Naive thymus-derived CD4-positive, alpha-beta T cell (primary cell): ENCODE measurements at regions of chr5 and their contacts with region 1.

Region 1: DNA sequence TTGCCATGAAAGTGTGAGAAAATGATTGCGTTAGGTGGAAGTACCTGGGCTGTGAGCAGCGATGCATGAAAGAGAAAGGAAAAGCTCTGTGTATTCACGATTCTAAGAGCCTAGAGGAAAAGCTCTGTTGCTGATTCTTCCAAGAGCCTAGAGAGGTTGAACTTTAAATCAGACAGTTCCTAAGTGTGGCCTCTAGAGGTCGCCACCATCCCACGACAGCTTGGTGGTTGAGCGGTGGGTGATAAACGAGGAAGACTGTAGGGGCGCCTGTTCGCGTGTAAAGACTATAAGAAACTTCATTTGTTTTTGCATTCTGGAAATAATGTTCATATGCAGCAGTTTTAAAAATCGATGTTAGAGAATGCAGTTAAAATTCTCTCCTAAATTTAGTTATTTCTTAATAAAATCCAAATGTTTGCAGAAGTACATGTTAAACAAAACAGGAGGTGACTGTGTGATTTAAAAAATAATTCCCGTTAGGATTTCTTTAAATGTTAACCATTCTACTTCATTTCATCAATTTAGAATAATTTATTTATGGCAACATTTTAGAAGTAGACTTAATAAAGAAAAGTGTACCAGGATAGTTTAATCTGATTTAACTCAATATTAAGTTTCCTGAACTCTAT is 107.7 kb downstream of the TENT4A start:
- DNase-seq: peak in 6 of 9 donors; percentile 16 to 64 (median 30)
- ATAC-seq: peak; percentile 75
- H3K4me3 ChIP-seq: no peak overlapping the region
- H3K4me3 Mint-ChIP-seq: no peak overlapping the region
- H3K27ac ChIP-seq: no peak overlapping the region
- H3K27ac Mint-ChIP-seq: no peak overlapping the region
- H3K4me1 ChIP-seq: no peaks in the 10 kb centered on the region
- H3K4me1 Mint-ChIP-seq: peaks cover 0 to 9% (median 0%) of the 10 kb centered on the region in 7 donors
- H3K27me3 ChIP-seq: peaks cover 0 to 7% of the 10 kb centered on the region in 2 donors
- H3K27me3 Mint-ChIP-seq: peaks cover 11 to 34% (median 27%) of the 10 kb centered on the region in 5 donors

Region 2: GRCh38 chr5:6837519-6838110 is 16.6 kb after region 1 on chr5:
- CTCF ChIA-PET with region 1: no interaction called
- POLR2A ChIA-PET with region 1: no interaction called
- intact Hi-C with region 1: loop called in 1 of 2 experiments (anchors 2 kb)
- DNase-seq: peak in 1 of 9 donors; percentile 39
- ATAC-seq: no peak
- H3K4me3 ChIP-seq: no peak overlapping the region
- H3K4me3 Mint-ChIP-seq: no peak overlapping the region
- H3K27ac ChIP-seq: no peak overlapping the region
- H3K27ac Mint-ChIP-seq: no peak overlapping the region
- H3K4me1 ChIP-seq: no peaks in the 10 kb centered on the region
- H3K4me1 Mint-ChIP-seq: peaks cover 0 to 16% (median 2%) of the 10 kb centered on the region in 7 donors
- H3K27me3 ChIP-seq: no peaks in the 10 kb centered on the region
- H3K27me3 Mint-ChIP-seq: peaks cover 0 to 12% (median 0%) of the 10 kb centered on the region in 5 donors

Region 3: DNA sequence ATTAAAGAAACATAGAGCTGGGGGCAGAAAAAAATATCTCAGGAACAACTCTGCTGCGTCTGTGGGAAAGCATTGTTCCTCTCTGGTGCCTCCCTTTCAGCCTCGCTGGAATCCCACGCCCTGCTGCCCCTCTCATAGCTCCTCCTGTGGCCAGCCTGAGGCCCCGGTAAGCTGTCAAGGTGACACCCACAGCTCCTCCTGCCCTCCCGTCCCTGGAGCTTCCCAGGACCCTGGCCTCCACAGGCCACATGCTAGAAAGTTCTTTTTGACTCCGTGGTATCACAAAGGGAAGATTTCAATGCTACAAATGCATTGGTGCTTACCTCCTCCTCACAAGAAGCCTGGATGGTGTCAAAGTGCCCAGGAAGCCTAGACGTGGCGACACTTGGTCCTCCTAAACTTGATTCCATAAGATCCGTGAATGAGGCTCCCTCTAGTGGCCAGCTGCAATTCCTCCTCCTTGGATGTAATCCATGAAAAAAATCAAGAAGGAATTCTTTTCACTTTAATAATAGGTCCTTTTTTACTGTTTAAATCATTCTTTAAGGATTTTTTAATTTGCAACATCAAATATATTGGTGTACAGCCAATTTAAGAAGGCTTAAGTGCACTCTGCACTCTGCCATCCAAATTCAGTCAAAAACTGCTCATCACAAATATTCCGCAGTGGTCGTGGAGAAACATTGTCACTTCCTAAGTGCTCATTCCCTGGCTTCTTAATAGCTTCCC is 925.1 kb after region 1 on chr5:
- CTCF ChIA-PET with region 1: no interaction called
- POLR2A ChIA-PET with region 1: no interaction called
- intact Hi-C with region 1: loop called in 1 of 2 experiments (anchors 1 kb)
- DNase-seq: peak in 3 of 9 donors; percentile 3 to 39 (median 28)
- ATAC-seq: no peak
- H3K4me3 ChIP-seq: no peak overlapping the region
- H3K4me3 Mint-ChIP-seq: no peak overlapping the region
- H3K27ac ChIP-seq: no peak overlapping the region
- H3K27ac Mint-ChIP-seq: no peak overlapping the region
- H3K4me1 ChIP-seq: no peaks in the 10 kb centered on the region
- H3K4me1 Mint-ChIP-seq: peaks cover 0 to 3% (median 0%) of the 10 kb centered on the region in 7 donors
- H3K27me3 ChIP-seq: no peaks in the 10 kb centered on the region
- H3K27me3 Mint-ChIP-seq: peaks cover 1 to 11% (median 8%) of the 10 kb centered on the region in 5 donors